ENCODE measurements at regions of chr15 and their contacts with region 1.

Region 1: GRCh38 chr15:66774001-66774814 is 72.2 kb downstream of the SMAD6 start:
- DNase-seq: peak; percentile 78
- ATAC-seq: peak; percentile 83
- H3K4me3 ChIP-seq: peak overlapping the region in 1 of 3 experiments; percentile 29; a peak in 1 of 6 replicates
- H3K27ac ChIP-seq: peak overlapping the region; percentile 73
- H3K4me1 ChIP-seq: peaks cover 66% of the 10 kb centered on the region
- H3K27me3 ChIP-seq: no peaks in the 10 kb centered on the region
- CTCF ChIP-seq: peak; percentile 98
- EP300 ChIP-seq: peak in 1 of 2 experiments; percentile 24; a peak in 1 of 4 replicates
- POLR2A ChIP-seq: no peak
- RAD21 ChIP-seq: peak; percentile 97

Region 2: DNA sequence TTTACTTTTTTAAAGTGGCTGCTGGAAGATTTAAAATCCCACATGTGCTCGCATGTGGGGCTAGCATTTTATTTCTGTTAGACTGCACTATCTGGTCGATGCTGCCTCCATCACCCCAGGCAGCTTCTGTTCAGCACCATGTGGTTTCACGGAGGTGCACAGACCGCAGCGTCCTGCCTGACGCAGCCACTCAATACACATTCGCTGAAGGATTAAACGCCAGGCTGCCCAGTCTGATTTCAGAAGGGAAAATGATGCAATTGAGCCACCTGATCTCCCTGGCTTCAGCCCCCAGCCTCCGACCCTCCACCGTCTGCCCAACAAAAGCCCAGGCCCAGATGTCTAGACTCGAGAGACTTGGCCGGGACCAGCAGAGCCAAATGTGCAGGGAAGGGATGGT is 605.2 kb before region 1 on chr15:
- CTCF ChIA-PET with region 1: no interaction called
- POLR2A ChIA-PET with region 1: no interaction called
- in situ Hi-C with region 1: no loop called
- intact Hi-C with region 1: no loop called
- DNase-seq: no peak
- ATAC-seq: no peak
- H3K4me3 ChIP-seq: no peak overlapping the region
- H3K27ac ChIP-seq: no peak overlapping the region
- H3K4me1 ChIP-seq: no peaks in the 10 kb centered on the region
- H3K27me3 ChIP-seq: peaks cover 5 to 33% of the 10 kb centered on the region in 2 experiments; a peak in 4 of 5 replicates
- CTCF ChIP-seq: no peak
- EP300 ChIP-seq: no peak
- POLR2A ChIP-seq: no peak
- RAD21 ChIP-seq: no peak

Region 3: DNA sequence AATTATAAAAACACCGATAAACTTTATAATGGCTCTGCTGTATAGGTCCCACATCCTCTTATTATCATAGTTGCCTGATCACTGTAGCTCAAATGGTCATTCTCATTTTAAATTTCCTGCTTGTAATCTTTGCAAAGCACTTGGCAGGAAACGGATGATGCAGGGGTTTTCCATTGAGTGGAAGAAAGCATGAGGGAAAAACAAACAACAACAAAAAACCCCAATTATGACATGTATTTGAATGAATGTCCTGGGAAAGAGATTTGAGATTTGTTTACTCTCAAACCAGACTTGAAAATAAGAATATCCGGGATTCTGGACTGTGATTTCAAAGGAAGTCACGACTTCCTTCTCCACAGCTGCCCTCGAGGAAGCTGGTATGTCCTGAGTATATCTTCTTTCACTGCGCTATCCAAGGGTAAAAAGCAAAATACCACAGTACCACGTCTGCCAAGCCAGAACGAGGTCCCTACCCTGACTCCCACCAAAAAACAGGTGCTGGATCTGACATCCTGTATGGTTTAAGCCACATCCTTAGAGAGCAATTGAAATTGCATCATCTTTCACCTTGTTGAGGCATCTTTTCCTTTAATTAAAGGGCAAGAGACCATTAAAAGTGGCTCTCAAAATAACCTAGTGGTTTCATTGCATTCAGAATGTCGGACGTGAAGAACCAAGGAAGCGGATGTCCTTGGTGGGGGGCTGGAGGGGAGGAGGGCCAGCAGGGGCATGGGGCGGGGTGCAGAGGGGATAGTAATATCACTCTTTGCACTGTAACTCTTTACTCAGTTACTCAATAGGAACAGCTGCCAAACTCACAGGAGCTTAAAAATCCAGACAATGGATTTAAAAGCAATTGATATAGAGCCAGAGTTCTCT is 404.2 kb before region 1 on chr15:
- CTCF ChIA-PET with region 1: no interaction called
- POLR2A ChIA-PET with region 1: no interaction called
- in situ Hi-C with region 1: no loop called
- intact Hi-C with region 1: no loop called
- DNase-seq: no peak
- ATAC-seq: peak; percentile 63
- H3K4me3 ChIP-seq: peak overlapping the region; percentile 20 to 42 (median 41)
- H3K27ac ChIP-seq: no peak overlapping the region
- H3K4me1 ChIP-seq: peaks cover 36% of the 10 kb centered on the region
- H3K27me3 ChIP-seq: no peaks in the 10 kb centered on the region
- CTCF ChIP-seq: no peak
- EP300 ChIP-seq: no peak
- POLR2A ChIP-seq: no peak
- RAD21 ChIP-seq: no peak

Region 4: GRCh38 chr15:66433726-66434125 is 340.5 kb before region 1 on chr15:
- CTCF ChIA-PET with region 1: no interaction called
- POLR2A ChIA-PET with region 1: no interaction called
- in situ Hi-C with region 1: no loop called
- intact Hi-C with region 1: no loop called
- DNase-seq: no peak
- ATAC-seq: no peak
- H3K4me3 ChIP-seq: no peak overlapping the region
- H3K27ac ChIP-seq: no peak overlapping the region
- H3K4me1 ChIP-seq: no peaks in the 10 kb centered on the region
- H3K27me3 ChIP-seq: no peaks in the 10 kb centered on the region
- CTCF ChIP-seq: no peak
- EP300 ChIP-seq: no peak
- POLR2A ChIP-seq: no peak
- RAD21 ChIP-seq: no peak

Region 5: GRCh38 chr15:66603301-66604179 is 170.7 kb before region 1 on chr15:
- CTCF ChIA-PET with region 1: interaction called, 11 read pairs
- POLR2A ChIA-PET with region 1: no interaction called
- in situ Hi-C with region 1: no loop called
- intact Hi-C with region 1: loop called (anchors 5 kb)
- DNase-seq: peak; percentile 40
- ATAC-seq: peak; percentile 92
- H3K4me3 ChIP-seq: no peak overlapping the region
- H3K27ac ChIP-seq: no peak overlapping the region
- H3K4me1 ChIP-seq: no peaks in the 10 kb centered on the region
- H3K27me3 ChIP-seq: no peaks in the 10 kb centered on the region; a peak in 1 of 5 replicates
- CTCF ChIP-seq: peak; percentile 88
- EP300 ChIP-seq: no peak
- POLR2A ChIP-seq: no peak
- RAD21 ChIP-seq: peak; percentile 89

Region 6: DNA sequence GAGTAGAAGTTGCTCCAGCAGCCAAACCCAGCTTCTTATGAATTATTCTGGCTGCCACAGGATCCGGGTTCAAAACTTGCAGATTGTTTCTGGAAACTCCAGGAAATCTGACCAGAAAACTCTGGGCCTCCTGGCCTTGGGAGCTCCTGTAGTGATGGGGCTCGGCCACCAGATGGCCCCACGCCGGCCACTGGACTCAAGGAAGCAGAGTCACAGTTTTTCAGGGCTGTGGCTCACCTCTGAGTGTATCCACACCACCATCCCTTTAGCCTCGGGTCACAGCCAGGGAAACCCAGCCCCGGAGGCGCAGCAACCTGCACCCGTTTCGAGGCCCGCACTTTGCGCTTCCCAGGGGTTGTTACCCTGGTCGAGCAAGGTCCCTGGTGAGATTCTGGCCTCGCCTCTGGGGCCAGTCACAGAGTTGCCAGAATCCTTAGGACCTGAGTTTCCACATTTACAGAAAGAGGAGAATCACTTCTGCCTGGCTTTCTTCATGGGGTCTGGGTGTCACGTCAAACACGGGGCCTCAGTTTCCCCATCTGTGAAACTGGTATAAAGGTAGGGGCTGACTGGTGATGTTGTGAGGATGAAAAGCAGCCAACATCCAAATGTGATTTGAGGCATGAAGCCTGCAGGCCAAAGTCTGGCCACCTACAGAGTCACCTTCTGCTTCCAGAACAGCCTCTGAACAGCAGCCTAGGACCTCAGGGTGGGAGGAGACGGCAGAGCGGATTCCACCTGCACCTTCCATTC is 154.9 kb before region 1 on chr15:
- CTCF ChIA-PET with region 1: interaction called, 8 read pairs
- POLR2A ChIA-PET with region 1: interaction called, 3 read pairs
- in situ Hi-C with region 1: loop called (anchors 5 kb)
- intact Hi-C with region 1: loop called (anchors 5 kb)
- DNase-seq: peak; percentile 52
- ATAC-seq: peak; percentile 84
- H3K4me3 ChIP-seq: no peak overlapping the region
- H3K27ac ChIP-seq: no peak overlapping the region
- H3K4me1 ChIP-seq: peaks cover 38% of the 10 kb centered on the region
- H3K27me3 ChIP-seq: peaks cover 0 to 4% of the 10 kb centered on the region in 2 experiments; a peak in 2 of 5 replicates
- CTCF ChIP-seq: peak; percentile 84
- EP300 ChIP-seq: no peak
- POLR2A ChIP-seq: no peak
- RAD21 ChIP-seq: peak; percentile 83

Region 7: DNA sequence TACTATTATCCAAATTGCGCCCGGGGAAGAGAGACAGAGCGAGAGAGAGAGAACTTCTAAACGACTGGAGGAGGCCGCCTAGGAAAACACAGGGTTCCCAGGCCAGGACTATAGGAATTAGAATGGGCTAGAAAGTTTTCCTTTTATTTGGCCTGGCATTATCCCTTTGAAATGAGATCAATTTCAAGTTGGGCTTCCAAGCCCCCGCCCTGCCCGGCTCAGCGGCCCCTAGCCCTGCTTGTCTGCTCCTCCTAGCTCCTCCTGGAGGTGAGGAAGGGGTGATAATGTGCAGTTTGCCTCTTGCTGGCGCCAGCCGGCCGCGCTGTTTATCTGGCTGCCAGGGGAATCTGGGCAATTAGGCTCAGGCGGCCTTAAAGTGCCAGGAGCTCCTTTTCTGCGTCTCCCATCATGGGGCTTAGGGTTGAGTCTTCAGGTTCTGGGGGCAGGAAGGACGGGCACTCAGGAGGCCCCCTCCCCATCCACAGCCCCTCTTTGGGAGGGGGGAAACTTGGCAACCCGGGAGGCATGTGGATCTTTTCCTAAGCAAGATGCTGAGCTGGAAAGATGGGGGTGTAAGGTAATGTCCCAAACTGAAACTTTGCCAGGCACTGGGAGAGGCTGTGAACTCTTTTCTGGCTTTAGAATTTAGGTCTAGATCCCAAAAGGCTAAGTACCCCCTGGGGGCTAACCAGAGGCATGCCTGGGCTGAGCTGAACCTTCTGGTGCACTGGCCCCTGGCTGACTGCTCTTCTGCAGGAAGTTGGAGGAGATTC is 66.7 kb before region 1 on chr15:
- CTCF ChIA-PET with region 1: no interaction called
- POLR2A ChIA-PET with region 1: interaction called, 96 read pairs
- in situ Hi-C with region 1: loop called (anchors 5 kb)
- intact Hi-C with region 1: loop called (anchors 1 kb)
- DNase-seq: peak; percentile 47
- ATAC-seq: peak; percentile 30
- H3K4me3 ChIP-seq: no peak overlapping the region
- H3K27ac ChIP-seq: no peak overlapping the region
- H3K4me1 ChIP-seq: peaks cover 38% of the 10 kb centered on the region
- H3K27me3 ChIP-seq: no peaks in the 10 kb centered on the region
- CTCF ChIP-seq: peak; percentile 40
- EP300 ChIP-seq: no peak
- POLR2A ChIP-seq: no peak
- RAD21 ChIP-seq: no peak

Region 8: DNA sequence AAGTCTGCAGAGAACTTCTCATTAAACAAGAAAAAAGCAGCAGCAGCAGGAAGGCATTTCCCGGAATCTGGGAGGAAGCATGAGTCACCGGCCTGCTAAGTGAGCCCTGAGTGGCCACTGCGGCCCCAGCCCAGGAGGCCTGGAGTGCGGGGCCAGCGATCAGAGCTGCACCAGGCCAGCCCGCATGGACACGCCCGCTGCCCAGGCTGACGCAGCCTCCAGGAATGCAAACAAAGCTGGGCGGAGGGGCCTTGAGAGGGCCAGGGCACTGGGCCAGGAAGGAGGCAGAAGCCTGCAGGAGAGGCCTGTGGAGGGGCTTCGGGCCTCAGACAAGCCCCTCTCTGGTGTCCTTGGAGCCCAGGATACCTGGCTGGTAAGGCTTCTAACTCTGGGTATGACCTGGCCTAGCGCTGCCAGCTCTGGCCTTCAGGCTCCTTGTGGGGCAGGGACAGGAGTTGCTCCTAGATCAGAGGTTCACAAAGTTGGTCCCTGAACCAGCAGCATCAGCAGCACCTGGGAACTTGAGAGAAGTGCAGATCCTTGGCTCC is 29.0 kb after region 1 on chr15:
- CTCF ChIA-PET with region 1: no interaction called
- POLR2A ChIA-PET with region 1: interaction called, 7 read pairs
- in situ Hi-C with region 1: no loop called
- intact Hi-C with region 1: loop called (anchors 1 kb)
- DNase-seq: peak; percentile 84
- ATAC-seq: peak; percentile 100
- H3K4me3 ChIP-seq: peak overlapping the region in 1 of 3 experiments; percentile 50; a peak in 2 of 6 replicates
- H3K27ac ChIP-seq: no peak overlapping the region
- H3K4me1 ChIP-seq: peaks cover 25% of the 10 kb centered on the region
- H3K27me3 ChIP-seq: peaks cover 0 to 4% of the 10 kb centered on the region in 2 experiments; a peak in 2 of 5 replicates
- CTCF ChIP-seq: no peak
- EP300 ChIP-seq: peak in 1 of 2 experiments; percentile 47; a peak in 1 of 4 replicates
- POLR2A ChIP-seq: no peak
- RAD21 ChIP-seq: peak; percentile 19; the same call in 1 of the 2 replicates